ENCODE measurements at regions of chr7 and their contacts with region 1.

Region 1: DNA sequence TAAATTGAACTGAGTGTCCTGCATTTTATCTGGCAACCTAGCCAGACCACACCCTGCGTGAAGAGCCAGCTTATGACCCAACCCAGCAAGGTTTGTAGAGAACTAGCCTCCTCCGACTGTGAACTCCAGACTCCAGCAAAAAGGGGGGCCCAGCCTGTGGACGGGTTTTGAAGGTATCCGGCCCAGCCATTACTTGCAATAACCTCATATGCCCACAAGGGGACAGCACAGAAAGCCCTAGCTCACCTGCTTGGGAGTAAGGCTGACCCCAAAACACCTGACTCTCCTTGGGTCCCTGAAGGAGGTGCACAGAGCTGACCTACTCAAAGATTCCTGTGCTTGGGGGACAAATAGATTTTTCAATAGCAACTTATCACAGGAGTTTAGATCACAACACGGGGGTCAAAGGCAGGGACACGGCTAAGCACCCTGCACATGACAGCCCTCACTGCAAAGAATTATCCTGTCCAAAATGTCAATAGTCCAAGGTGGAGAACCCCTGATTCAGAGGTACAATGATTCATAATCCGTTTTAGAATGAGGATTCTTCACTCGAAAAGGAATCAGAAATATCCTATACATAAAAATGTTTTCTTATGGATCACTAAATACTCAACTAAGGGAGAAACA is 4.6 kb downstream of the TRPV6 start:
- H3K4me3 Mint-ChIP-seq: no peak overlapping the region
- H3K27ac Mint-ChIP-seq: no peak overlapping the region
- H3K4me1 Mint-ChIP-seq: no peaks in the 10 kb centered on the region
- H3K27me3 Mint-ChIP-seq: peaks cover 10% of the 10 kb centered on the region

Region 2: DNA sequence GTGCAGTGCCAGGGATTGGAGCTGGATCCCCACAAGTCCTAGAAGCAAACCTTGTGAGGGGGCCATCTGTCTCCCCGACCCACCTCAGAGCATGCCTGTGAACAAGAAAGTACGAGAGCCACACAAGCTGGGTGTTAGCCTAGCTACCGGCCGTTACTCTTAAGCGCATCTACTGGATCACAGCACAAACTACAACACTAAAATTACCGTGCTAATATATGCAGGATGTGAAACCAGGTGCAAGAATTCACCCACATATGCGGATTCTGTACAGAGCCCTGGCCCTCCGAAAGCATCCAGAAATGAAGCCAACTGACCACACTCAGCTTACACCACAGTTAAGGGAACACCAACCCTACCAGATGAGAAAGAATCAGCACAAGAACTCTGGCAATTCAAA is 147.7 kb before region 1 on chr7:
- intact Hi-C with region 1: no loop called
- H3K4me3 Mint-ChIP-seq: no peak overlapping the region
- H3K27ac Mint-ChIP-seq: no peak overlapping the region
- H3K4me1 Mint-ChIP-seq: no peaks in the 10 kb centered on the region
- H3K27me3 Mint-ChIP-seq: no peaks in the 10 kb centered on the region

Region 3: DNA sequence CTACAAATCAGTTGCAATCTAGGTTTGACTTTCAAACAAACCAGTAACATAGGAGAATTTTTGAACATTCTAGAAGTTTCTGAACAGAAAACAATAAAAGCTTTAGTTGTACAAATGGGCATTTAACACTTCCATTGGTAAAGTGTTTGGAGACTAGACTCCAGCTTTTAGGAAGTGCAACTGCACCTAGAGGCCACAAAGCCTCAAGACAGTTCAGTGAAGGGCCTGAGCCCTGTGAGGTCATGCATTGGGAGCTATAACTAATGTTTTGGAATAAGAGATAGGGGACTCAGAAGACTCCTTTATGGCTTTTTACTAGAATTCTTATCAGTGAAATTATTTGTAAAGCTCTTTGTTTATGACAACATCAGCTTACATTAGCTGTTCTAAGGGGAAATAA is 29.1 kb before region 1 on chr7:
- intact Hi-C with region 1: no loop called
- H3K4me3 Mint-ChIP-seq: no peak overlapping the region
- H3K27ac Mint-ChIP-seq: no peak overlapping the region
- H3K4me1 Mint-ChIP-seq: peaks cover 26% of the 10 kb centered on the region
- H3K27me3 Mint-ChIP-seq: peaks cover 8% of the 10 kb centered on the region

Region 4: DNA sequence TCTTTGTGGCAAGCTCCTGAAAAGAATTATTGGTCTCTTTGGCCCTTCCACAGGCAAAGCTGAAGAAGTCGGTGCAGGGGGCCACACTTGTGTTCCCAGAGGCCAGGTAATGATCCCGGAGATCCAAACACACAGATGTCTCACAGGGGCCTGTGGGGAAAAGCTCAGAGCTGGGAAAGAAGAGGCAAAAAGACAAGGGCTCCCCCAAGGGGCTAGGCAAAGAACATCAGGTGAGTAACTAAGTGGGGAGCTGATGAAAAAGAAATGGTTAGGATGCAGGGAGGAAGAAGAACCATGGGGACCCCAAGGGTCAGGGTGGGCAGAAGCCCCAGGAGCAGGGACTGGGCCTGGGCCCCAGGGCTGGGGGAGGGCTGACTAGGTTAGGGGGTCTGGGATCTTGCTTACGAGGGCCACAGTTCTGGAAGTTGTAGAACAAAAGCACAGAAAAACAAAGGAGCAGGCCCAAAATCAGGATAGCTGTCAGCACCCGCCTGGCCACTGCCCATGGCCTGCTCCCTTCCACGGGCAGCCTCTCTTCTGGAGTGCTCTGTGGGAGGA is 80.0 kb after region 1 on chr7:
- intact Hi-C with region 1: loop called (anchors 2 kb)
- H3K4me3 Mint-ChIP-seq: no peak overlapping the region
- H3K27ac Mint-ChIP-seq: no peak overlapping the region
- H3K4me1 Mint-ChIP-seq: peaks cover 5% of the 10 kb centered on the region
- H3K27me3 Mint-ChIP-seq: peaks cover 19% of the 10 kb centered on the region

Region 5: GRCh38 chr7:142992464-142992863 is 111.5 kb after region 1 on chr7:
- intact Hi-C with region 1: loop called (anchors 1 kb)
- H3K4me3 Mint-ChIP-seq: no peak overlapping the region
- H3K27ac Mint-ChIP-seq: no peak overlapping the region
- H3K4me1 Mint-ChIP-seq: no peaks in the 10 kb centered on the region
- H3K27me3 Mint-ChIP-seq: no peaks in the 10 kb centered on the region

Region 6: GRCh38 chr7:143008007-143008901 is 127.3 kb after region 1 on chr7:
- intact Hi-C with region 1: loop called (anchors 1 kb)
- H3K4me3 Mint-ChIP-seq: no peak overlapping the region
- H3K27ac Mint-ChIP-seq: no peak overlapping the region
- H3K4me1 Mint-ChIP-seq: peaks cover 13% of the 10 kb centered on the region
- H3K27me3 Mint-ChIP-seq: no peaks in the 10 kb centered on the region

Region 7: DNA sequence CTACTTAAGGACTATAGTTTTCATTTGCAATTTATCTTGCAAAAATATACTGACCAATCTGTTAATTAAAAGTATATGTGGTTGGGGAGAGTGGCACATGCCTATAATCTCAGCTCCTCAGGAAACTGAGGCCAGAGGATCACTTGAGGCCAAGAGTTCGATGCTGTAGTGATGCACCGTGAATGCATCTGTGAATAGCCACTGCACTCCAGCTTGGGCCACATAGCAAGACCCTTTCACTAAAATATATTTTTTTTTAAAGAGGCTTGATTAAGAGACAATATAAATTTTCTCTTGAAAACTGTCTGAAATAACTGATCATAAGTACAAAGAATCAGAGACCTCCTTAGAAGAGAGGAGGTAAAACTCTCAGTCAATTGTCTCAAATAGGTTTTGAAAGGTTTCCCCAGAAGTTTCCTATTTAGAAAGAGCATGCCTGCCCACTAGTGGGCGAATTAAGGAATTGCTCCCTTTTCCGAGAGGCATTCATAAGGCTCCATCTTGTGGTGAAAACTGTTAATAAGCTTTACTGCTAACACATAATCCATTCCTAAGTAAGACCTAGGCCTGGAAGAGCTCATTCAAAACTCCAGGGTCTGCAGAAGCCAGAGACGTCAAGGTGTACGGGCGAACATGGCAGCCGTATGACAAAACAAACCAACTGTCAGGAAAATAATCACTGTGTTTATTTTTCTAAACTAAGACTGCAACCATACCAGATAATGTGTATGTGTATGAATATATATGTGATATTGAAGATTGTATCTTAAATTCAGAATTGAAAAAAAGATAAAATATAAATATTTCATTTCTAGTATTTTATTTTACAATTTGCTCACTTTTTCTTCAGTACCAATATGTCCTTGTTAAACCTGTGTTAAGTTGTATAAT is 334.0 kb after region 1 on chr7:
- intact Hi-C with region 1: loop called (anchors 10 kb)
- H3K4me3 Mint-ChIP-seq: no peak overlapping the region
- H3K27ac Mint-ChIP-seq: no peak overlapping the region
- H3K4me1 Mint-ChIP-seq: peaks cover 17% of the 10 kb centered on the region
- H3K27me3 Mint-ChIP-seq: no peaks in the 10 kb centered on the region

Measured in dendritic cell treated with granulocyte-macrophage colony-stimulating factor and Interleukin-4, amounts not matched to agents 40 ng/mL and 50 ng/mL, for 4 days (primary cell).